Naive thymus-derived CD4-positive, alpha-beta T cell (primary cell): ENCODE measurements at regions of chr10 and their contacts with region 1.

Region 1: DNA sequence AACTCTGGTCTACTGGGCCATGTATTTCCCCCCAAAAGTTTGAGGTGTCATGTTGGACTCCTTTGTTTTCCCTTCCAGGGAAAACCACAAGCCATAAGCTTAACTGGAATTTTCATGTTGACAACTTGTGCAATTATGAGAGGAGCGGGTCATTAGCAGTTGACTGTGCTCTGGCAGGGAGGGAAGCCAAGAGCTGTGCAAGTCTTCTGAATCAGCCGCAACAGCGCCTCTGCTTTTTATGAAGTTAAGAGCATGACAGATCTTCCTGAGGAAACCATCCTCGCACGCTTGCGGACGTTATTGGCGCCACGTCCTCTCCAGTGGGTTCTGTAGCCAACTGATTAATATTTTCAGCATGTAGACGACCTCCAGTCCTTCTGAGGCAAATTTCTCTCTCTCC is 148.7 kb upstream of the MKI67 start:
- DNase-seq: peak in 1 of 9 donors; percentile 1
- ATAC-seq: no peak
- H3K4me3 ChIP-seq: no peak overlapping the region
- H3K4me3 Mint-ChIP-seq: peak overlapping the region; percentile 3 to 79 (median 44)
- H3K27ac ChIP-seq: no peak overlapping the region
- H3K27ac Mint-ChIP-seq: peak overlapping the region in 1 of 9 donors; percentile 5
- H3K4me1 ChIP-seq: no peaks in the 10 kb centered on the region
- H3K4me1 Mint-ChIP-seq: peaks cover 5 to 9% (median 7%) of the 10 kb centered on the region in 7 donors
- H3K27me3 ChIP-seq: no peaks in the 10 kb centered on the region
- H3K27me3 Mint-ChIP-seq: peaks cover 55 to 79% (median 71%) of the 10 kb centered on the region in 5 donors

Region 2: DNA sequence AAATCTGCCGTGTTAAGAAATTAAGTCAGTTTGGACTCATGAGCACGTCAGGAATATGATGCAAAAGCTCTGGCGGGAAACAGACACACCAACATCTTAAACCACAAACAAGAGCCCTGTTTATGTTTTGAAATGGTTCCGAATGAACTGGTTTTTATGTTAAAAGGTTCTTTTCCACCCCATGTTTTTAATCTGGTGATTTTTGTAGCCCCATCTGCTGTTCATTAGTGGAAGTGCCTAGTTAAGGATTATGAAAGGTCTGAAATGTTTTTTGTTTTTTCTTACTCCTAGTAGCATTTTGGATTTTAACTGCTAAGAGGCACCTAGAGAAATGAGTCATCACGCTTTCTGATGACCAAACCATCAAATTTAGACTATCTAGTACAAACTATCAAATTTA is 255.4 kb after region 1 on chr10:
- CTCF ChIA-PET with region 1: no interaction called
- POLR2A ChIA-PET with region 1: no interaction called
- intact Hi-C with region 1: loop called in 1 of 2 experiments (anchors 10 kb)
- DNase-seq: no peak
- ATAC-seq: no peak
- H3K4me3 ChIP-seq: no peak overlapping the region
- H3K4me3 Mint-ChIP-seq: no peak overlapping the region
- H3K27ac ChIP-seq: no peak overlapping the region
- H3K27ac Mint-ChIP-seq: no peak overlapping the region
- H3K4me1 ChIP-seq: no peaks in the 10 kb centered on the region
- H3K4me1 Mint-ChIP-seq: no peaks in the 10 kb centered on the region
- H3K27me3 ChIP-seq: peaks cover 0 to 2% of the 10 kb centered on the region in 2 donors
- H3K27me3 Mint-ChIP-seq: peaks cover 2 to 31% (median 19%) of the 10 kb centered on the region in 5 donors